Prostate gland (tissue), 2 donors: ENCODE measurements at regions of chr3 and their contacts with region 1.

Region 1: GRCh38 chr3:138923531-138923994 is 23.4 kb downstream of the FOXL2 start:
- DNase-seq: peak; percentile 81
- H3K4me3 ChIP-seq: no peak overlapping the region
- H3K27ac ChIP-seq: no peak overlapping the region
- H3K4me1 ChIP-seq: no peaks in the 10 kb centered on the region
- H3K27me3 ChIP-seq: no peaks in the 10 kb centered on the region
- CTCF ChIP-seq: peak; percentile 77 to 92 (median 88)
- POLR2A ChIP-seq: no peak

Region 2: DNA sequence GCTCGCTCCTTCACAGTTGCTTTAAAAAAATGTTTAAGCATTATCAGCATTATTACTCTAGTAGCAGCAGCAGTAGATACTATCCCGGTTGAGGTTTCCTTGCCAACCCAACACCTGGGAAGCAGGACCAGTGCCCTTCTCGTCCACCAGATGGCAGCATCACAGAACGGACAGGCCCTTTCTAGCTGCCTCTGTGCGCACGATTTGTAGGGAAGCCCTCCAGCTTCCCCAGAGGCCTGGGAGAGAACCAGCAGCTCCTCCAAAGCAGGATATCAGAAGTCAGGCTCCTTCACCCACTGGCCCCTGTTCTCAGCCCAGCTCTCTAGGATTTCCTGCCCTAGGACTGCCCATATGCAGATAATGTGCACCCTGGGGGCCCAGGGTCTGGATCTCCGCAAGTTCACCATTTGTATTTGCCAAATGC is 506.0 kb before region 1 on chr3:
- intact Hi-C with region 1: loop called (anchors 10 kb)
- DNase-seq: peak; percentile 68
- H3K4me3 ChIP-seq: no peak overlapping the region
- H3K27ac ChIP-seq: no peak overlapping the region
- H3K4me1 ChIP-seq: no peaks in the 10 kb centered on the region
- H3K27me3 ChIP-seq: no peaks in the 10 kb centered on the region
- CTCF ChIP-seq: peak; percentile 74 to 90 (median 80)
- POLR2A ChIP-seq: no peak

Region 3: GRCh38 chr3:139269984-139270383 is 346.4 kb after region 1 on chr3:
- intact Hi-C with region 1: no loop called
- DNase-seq: no peak
- H3K4me3 ChIP-seq: no peak overlapping the region
- H3K27ac ChIP-seq: no peak overlapping the region
- H3K4me1 ChIP-seq: no peaks in the 10 kb centered on the region
- H3K27me3 ChIP-seq: no peaks in the 10 kb centered on the region
- CTCF ChIP-seq: no peak
- POLR2A ChIP-seq: no peak